CD4-positive, alpha-beta memory T cell (primary cell): ENCODE measurements at regions of chr15 and their contacts with region 1.

Region 1: GRCh38 chr15:85707519-85708338 is 87.0 kb downstream of the KLHL25 start:
- DNase-seq: peak in 2 of 5 donors; percentile 55 to 73
- H3K4me3 ChIP-seq: peak overlapping the region; percentile 42 to 61
- H3K4me3 Mint-ChIP-seq: peak overlapping the region; percentile 83 to 95 (median 87)
- H3K27ac ChIP-seq: peak overlapping the region; percentile 86
- H3K27ac Mint-ChIP-seq: peak overlapping the region; percentile 96 to 100 (median 97)
- H3K4me1 ChIP-seq: peaks cover 72% of the 10 kb centered on the region
- H3K4me1 Mint-ChIP-seq: peaks cover 69 to 89% (median 80%) of the 10 kb centered on the region in 4 donors
- H3K27me3 ChIP-seq: no peaks in the 10 kb centered on the region
- H3K27me3 Mint-ChIP-seq: no peaks in the 10 kb centered on the region

Region 2: DNA sequence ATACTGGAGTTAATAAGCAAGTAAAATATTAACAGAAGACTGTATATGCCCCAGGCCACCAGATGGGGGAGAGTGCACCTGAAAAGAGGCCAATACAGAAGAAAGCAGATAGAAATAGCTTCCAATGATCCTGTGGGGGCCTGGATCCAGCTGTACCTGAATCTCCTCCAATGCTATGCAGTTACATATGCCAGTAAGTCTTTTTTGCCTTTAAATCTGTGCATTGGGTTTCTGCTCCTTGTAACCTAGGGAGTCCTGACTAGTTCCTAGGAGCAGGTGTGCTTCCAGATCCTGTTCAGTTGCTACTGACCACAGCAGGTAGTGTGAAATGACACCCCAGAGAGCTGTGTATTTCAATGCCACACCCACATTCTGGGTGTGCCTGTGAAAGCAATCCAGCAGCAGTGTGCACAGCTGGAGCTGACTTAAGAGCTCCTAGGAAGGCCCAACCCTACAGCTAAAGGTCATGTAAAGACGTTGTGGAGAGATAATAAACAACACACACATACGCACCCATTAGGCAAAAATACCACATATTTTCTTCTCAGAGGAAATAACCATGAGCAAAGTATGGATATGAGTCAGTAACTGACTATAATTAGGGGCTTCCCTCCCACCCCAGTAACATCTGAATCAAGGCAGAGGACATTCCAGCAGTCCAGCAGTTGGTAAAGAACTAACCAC is 389.5 kb before region 1 on chr15:
- CTCF ChIA-PET with region 1: no interaction called
- POLR2A ChIA-PET with region 1: interaction called, 3 read pairs
- intact Hi-C with region 1: loop called (anchors 10 kb)
- DNase-seq: peak in 3 of 5 donors; percentile 10 to 49 (median 29)
- H3K4me3 ChIP-seq: no peak overlapping the region
- H3K4me3 Mint-ChIP-seq: peak overlapping the region in 4 of 8 donors; percentile 35 to 62 (median 51)
- H3K27ac ChIP-seq: no peak overlapping the region
- H3K27ac Mint-ChIP-seq: peak overlapping the region in 6 of 7 donors; percentile 79 to 90 (median 82)
- H3K4me1 ChIP-seq: peaks cover 42% of the 10 kb centered on the region
- H3K4me1 Mint-ChIP-seq: peaks cover 32 to 47% (median 38%) of the 10 kb centered on the region in 4 donors
- H3K27me3 ChIP-seq: no peaks in the 10 kb centered on the region
- H3K27me3 Mint-ChIP-seq: no peaks in the 10 kb centered on the region

Region 3: DNA sequence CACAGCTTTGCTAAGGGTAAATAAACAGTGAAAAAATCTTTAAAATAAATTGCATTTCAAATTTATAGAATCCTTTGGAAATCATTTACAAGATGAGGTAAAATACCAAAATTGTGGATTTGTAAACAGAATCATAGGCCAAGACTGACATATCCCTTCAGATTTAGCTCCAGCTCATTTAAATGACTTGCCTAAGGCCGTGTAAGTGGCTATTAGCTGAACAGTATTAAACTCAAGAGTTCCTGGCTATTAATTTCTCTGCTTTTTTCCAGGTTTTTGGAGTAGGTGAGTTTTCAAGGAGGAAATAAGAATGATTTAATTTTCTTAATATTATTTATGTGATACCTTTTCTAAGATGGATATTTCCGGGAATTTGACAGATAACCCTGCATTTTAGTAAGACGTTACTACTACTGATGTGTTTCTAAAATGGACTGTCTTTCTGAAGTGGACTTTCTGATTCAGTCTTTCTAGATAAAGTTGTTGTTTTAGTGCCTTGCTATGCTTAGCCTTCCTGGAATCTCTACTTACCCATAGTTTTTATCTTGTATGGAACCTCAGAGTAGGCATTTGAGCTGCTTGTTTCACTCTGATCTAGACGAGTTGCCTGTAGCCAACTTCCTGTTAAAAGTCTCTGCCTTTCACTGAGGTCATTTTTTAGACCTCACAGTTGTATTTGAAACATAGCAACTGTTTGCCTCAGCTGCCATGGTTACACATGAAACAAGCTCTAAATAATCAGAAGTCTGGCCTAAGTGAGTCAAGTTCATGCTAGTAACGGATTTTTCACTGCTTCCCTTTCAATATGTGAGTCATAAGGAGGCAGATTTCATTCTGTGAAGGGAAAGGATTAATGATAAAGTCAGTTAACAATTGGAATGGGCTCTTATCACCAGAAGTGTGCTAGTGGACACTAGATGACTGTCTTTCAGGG is 40.0 kb before region 1 on chr15:
- CTCF ChIA-PET with region 1: no interaction called
- POLR2A ChIA-PET with region 1: interaction called, 4 read pairs
- intact Hi-C with region 1: loop called (anchors 2 kb)
- DNase-seq: peak; percentile 79 to 91 (median 90)
- H3K4me3 ChIP-seq: no peak overlapping the region
- H3K4me3 Mint-ChIP-seq: peak overlapping the region; percentile 47 to 81 (median 60)
- H3K27ac ChIP-seq: peak overlapping the region; percentile 81
- H3K27ac Mint-ChIP-seq: peak overlapping the region; percentile 80 to 100 (median 97)
- H3K4me1 ChIP-seq: peaks cover 25% of the 10 kb centered on the region
- H3K4me1 Mint-ChIP-seq: peaks cover 18 to 28% (median 22%) of the 10 kb centered on the region in 4 donors
- H3K27me3 ChIP-seq: no peaks in the 10 kb centered on the region
- H3K27me3 Mint-ChIP-seq: no peaks in the 10 kb centered on the region

Region 4: DNA sequence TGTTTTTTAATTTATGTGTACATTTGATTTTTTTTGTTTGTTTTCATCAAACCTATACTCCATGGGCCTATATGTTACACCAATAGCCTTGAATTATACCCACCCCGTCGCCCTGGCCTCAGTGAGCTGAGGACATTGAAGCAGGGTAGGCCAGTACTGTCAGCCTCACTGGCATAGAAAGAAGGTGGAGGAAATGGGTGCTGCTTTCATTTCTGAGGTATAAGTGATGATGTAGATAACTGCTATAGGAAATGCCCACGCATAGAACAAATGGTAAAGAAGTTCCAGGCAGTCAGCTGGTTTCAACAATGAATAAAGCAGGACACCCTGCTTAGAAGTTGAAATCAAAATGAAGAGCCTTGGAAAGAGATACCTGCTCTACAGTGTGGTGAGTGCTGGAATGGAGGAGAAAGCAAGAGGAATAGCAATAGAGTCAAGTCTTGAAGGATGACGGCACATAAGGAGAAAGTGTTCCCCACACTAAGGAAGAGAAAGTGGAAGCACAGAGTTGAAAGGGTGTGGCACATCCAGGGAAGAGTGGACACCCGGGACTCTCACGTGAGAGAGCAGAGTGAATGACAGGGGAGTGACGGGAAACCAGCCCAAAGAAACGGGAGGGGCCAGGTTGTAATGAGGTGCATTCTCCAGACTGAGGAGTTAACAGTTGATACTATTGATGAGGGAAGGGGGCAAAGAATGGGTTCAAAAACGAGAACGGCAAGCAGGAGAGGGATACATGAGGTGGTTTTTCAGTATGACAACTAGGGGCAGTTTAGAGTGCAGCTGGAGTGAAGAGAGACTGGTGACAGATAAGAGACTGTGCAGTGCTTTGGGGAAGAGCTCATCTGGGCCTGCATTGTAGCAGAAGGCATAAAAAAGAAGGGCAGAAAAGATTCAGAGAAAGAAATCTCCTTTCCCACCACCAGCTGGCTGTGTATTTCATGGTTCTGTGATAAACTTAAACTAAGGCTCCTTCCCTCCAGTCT is 16.5 kb after region 1 on chr15:
- CTCF ChIA-PET with region 1: interaction called, 3 read pairs
- POLR2A ChIA-PET with region 1: interaction called, 8 read pairs
- intact Hi-C with region 1: loop called (anchors 2 kb)
- DNase-seq: peak; percentile 31 to 55 (median 53)
- H3K4me3 ChIP-seq: no peak overlapping the region
- H3K4me3 Mint-ChIP-seq: peak overlapping the region; percentile 59 to 82 (median 70)
- H3K27ac ChIP-seq: peak overlapping the region; percentile 64
- H3K27ac Mint-ChIP-seq: peak overlapping the region; percentile 85 to 99 (median 97)
- H3K4me1 ChIP-seq: peaks cover 49% of the 10 kb centered on the region
- H3K4me1 Mint-ChIP-seq: peaks cover 36 to 46% (median 41%) of the 10 kb centered on the region in 4 donors
- H3K27me3 ChIP-seq: no peaks in the 10 kb centered on the region
- H3K27me3 Mint-ChIP-seq: no peaks in the 10 kb centered on the region